ENCODE measurements at regions of chr7 and their contacts with region 1.

Region 1: GRCh38 chr7:110454713-110455112 is 636.2 kb upstream of the LRRN3 start:
- DNase-seq: no peak
- H3K4me3 ChIP-seq: no peak overlapping the region
- H3K27ac ChIP-seq: no peak overlapping the region
- H3K4me1 ChIP-seq: no peaks in the 10 kb centered on the region
- H3K27me3 ChIP-seq: no peaks in the 10 kb centered on the region
- CTCF ChIP-seq: no peak
- EP300 ChIP-seq: no peak
- POLR2A ChIP-seq: no peak
- RAD21 ChIP-seq: no peak

Region 2: DNA sequence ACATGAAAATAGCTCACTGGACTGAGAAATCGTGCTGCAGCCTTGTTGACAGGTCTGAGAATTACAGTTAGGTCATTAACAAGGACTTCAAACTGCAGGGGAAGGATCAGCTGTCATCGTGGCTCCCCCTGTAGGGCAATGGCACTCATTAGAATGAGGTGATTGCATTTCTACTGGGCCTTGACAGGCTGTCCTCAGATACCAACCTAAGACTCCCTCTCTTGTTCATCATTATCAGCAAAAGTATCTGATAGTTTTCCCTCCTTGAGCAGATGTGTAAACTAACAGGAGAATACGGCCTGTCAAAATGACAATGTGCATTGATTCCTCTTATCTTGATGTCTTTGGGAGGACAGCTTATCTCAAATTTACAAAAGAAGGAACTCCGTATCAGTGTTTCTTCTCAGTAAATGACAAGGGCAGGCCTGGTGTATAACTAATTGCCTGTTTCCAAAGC is 12.3 kb before region 1 on chr7:
- CTCF ChIA-PET with region 1: interaction called, 14 read pairs
- POLR2A ChIA-PET with region 1: no interaction called
- DNase-seq: peak; percentile 63 to 66
- H3K4me3 ChIP-seq: no peak overlapping the region
- H3K27ac ChIP-seq: no peak overlapping the region
- H3K4me1 ChIP-seq: no peaks in the 10 kb centered on the region
- H3K27me3 ChIP-seq: no peaks in the 10 kb centered on the region
- CTCF ChIP-seq: peak; percentile 71 to 92 (median 72)
- EP300 ChIP-seq: no peak
- POLR2A ChIP-seq: no peak
- RAD21 ChIP-seq: peak; percentile 87 to 91